Natural killer cell (primary cell): ENCODE measurements at regions of chr1 and their contacts with region 1.

Region 1: DNA sequence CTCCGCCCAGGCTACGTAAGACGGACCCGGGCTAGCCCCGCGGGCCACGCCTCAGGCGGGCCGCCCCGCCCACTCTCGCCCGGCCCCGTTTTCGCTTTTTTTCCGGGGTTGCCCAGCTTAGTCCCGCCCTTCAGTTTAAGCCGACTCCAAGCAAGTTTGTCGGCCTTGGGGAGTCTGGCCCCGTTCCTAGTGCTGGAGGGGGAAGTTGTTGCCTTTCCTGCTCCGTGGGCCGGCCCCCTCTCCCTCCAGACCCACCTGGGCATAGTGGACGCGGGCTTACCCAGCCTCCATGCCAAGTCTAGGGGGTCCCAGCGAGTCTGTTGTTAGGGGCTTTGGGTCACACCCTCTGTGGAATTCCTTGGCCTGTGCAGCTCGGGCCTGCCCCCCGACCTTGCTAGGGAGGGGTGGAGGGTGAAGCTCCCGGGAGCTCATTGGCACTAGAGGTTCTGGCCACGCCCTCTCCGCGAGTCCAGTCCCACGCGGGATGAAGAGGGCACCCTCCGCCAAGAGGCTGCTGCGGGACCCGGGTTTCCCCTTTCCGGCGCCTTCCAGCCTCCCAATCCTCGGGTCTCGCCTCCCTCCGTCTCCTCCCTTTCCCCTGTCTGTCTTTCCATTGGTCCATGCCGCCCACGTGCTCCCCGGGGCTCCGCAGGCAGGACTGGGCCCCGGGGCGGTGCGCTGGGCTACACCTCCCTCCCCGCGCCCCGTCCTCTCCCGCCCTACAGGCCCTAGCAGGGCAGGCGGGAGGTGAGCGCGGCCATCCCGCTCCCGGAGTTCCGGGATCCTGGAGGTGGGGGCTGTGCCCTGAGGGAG is 3.3 kb downstream of the RUSC1 start:
- DNase-seq: peak; percentile 79 to 93
- ATAC-seq: peak; percentile 78 to 90 (median 81)
- H3K4me3 ChIP-seq: peak overlapping the region; percentile 99
- H3K4me3 Mint-ChIP-seq: peak overlapping the region; percentile 96
- H3K27ac ChIP-seq: peak overlapping the region; percentile 89
- H3K27ac Mint-ChIP-seq: peak overlapping the region; percentile 74 to 79
- H3K4me1 ChIP-seq: peaks cover 38% of the 10 kb centered on the region
- H3K4me1 Mint-ChIP-seq: peaks cover 21 to 51% of the 10 kb centered on the region in 2 donors
- H3K27me3 ChIP-seq: no peaks in the 10 kb centered on the region
- H3K27me3 Mint-ChIP-seq: no peaks in the 10 kb centered on the region
- CTCF ChIP-seq: no peak

Region 2: DNA sequence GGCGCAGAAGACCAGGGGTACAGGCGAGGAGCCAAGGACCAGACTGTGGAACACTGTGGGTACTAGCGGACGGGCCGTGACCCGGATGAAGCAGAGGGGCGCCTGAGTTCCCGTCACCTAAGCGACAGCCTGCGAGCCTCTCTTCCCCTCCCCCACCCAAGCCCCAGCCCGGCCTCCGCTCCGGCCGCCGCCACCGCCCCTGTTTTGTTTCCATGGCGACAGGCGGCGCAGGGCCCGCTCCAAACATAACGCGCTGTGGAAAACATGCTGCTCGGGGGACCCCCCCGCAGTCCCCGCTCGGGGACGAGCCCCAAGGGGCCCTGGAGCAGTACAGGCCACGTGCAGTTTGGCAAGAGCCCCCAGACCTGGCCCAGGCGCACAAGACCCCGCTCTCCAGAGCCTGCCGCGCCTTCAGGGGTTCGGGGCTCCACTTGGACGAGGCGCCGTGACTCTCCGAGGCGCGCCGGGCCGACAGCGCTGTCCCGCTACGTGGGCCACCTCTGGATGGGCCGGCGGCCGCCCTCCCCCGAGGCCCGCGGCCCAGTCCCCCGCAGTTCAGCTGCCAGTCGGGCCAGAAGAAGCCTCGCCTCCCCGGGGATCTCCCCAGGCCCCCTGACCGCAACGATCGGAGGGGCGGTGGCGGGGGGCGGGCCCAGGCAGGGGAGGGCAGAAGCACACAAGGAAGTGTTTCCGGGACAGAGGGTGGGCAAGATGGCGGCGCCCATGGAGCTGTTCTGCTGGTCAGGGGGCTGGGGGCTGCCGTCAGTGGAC is 115.3 kb before region 1 on chr1 and contains the start of gene MTX1:
- intact Hi-C with region 1: loop called (anchors 1 kb)
- DNase-seq: peak; percentile 88 to 93
- ATAC-seq: peak; percentile 80 to 94 (median 86)
- H3K4me3 ChIP-seq: peak within 1 kb of the TSS; percentile 81
- H3K4me3 Mint-ChIP-seq: peak within 1 kb of the TSS; percentile 94
- H3K27ac ChIP-seq: peak within 1 kb of the TSS; percentile 100
- H3K27ac Mint-ChIP-seq: peak within 1 kb of the TSS; percentile 92 to 96
- H3K4me1 ChIP-seq: peaks cover 26% of the 10 kb centered on the region
- H3K4me1 Mint-ChIP-seq: peaks cover 25 to 33% of the 10 kb centered on the region in 2 donors
- H3K27me3 ChIP-seq: no peaks in the 10 kb centered on the region
- H3K27me3 Mint-ChIP-seq: no peaks in the 10 kb centered on the region
- CTCF ChIP-seq: no peak
- total RNA-seq, gene MTX1: 22.3 to 28.5 (median 27.9) TPM

Region 3: DNA sequence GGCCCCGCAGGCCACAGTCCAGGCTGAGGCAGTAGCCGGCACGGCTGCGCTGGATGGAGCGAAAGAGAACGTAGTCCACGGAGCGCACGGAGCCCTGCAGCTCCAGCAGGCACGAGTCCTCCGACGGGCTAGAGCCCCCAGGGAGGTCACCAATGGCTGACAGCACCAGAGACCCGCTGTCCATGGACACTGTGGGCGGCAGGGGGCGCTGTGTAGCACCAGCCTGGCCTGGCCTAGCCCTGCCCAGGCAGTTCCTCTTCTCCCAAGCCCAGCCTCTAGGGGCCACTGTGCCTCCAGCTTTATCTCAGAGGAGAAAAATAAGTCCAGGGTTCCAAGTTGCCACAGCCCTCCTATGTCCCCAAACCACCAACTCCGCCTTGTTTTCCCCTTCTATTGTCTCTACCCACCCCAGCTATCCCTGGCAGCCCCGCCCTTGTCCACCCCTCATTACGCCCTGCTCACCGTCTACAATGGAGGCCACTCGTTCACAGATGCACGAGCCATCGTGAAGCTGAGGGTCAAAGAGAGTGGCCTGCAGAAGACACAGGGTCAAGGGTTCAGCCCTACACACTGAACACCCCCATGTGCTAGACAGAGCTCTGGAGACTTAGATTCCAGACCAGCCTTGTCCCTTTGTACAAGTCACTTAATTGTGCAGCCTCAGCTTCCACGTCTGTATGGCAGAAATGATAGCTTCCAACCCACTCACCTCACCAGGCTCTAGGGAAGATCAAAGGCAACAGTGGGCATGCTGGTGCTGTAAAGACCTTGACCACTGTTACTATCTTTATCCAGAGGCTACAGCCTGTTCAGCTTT is 73.2 kb before region 1 on chr1:
- intact Hi-C with region 1: loop called (anchors 1 kb)
- DNase-seq: peak; percentile 96 to 97
- ATAC-seq: peak; percentile 98 to 100 (median 98)
- H3K4me3 ChIP-seq: peak overlapping the region; percentile 46
- H3K4me3 Mint-ChIP-seq: peak overlapping the region; percentile 63
- H3K27ac ChIP-seq: no peak overlapping the region
- H3K27ac Mint-ChIP-seq: peak overlapping the region in 1 of 2 donors; percentile 58
- H3K4me1 ChIP-seq: peaks cover 31% of the 10 kb centered on the region
- H3K4me1 Mint-ChIP-seq: peaks cover 18 to 33% of the 10 kb centered on the region in 2 donors
- H3K27me3 ChIP-seq: no peaks in the 10 kb centered on the region
- H3K27me3 Mint-ChIP-seq: no peaks in the 10 kb centered on the region
- CTCF ChIP-seq: peak; percentile 100

Region 4: DNA sequence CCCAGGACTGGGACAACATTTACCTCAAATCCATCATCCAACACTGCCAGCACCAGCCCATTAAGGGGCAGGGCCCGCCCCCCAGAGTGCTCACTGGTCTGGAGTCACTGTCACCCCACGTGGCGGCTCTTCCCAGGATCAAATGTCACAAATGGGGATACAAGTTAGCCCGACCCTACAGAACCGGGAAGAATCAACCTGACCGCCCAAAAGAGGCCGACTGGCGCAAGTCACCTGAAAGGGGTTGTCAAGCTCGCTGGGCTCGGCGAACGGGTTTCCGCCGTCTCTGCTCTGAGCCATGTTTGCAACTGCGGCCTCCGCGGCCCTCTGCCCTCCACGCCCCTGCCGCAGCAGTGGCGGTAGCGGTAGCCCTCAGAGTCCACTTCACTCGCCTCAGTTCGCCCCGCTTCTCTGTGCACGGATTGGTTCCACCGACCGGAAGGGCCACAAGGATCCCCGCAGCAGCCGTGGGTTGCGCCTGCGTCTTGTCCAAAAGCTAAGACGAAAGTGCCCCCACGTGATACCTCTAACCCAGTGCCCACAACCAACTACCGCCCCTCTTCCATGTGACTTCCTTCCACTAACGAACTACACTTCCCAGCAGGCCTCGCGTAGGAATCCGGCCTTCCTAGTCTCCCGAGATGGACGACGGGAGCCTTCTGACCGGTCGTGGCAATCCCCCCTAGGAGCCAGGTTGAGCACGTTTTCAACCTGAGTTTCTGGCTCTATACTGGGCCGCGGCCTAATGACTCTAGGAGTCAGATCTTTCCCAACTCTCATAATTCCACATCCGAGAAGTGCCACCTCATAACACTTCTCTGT is 61.9 kb before region 1 on chr1 and contains the start of gene SCAMP3:
- intact Hi-C with region 1: no loop called
- DNase-seq: peak; percentile 78 to 94
- ATAC-seq: peak; percentile 96 to 99 (median 99)
- H3K4me3 ChIP-seq: peak within 1 kb of the TSS; percentile 84
- H3K4me3 Mint-ChIP-seq: peak within 1 kb of the TSS; percentile 99
- H3K27ac ChIP-seq: peak within 1 kb of the TSS; percentile 64
- H3K27ac Mint-ChIP-seq: peak within 1 kb of the TSS; percentile 91 to 98
- H3K4me1 ChIP-seq: peaks cover 20% of the 10 kb centered on the region
- H3K4me1 Mint-ChIP-seq: peaks cover 32 to 34% of the 10 kb centered on the region in 2 donors
- H3K27me3 ChIP-seq: no peaks in the 10 kb centered on the region
- H3K27me3 Mint-ChIP-seq: no peaks in the 10 kb centered on the region
- CTCF ChIP-seq: no peak
- total RNA-seq, gene SCAMP3: 59.7 to 72.1 (median 65.0) TPM

Region 5: GRCh38 chr1:155273343-155274245 is 50.4 kb before region 1 on chr1 and contains the start of gene CLK2:
- intact Hi-C with region 1: loop called (anchors 2 kb)
- DNase-seq: peak; percentile 91 to 96
- ATAC-seq: peak; percentile 87 to 96 (median 89)
- H3K4me3 ChIP-seq: peak within 1 kb of the TSS; percentile 53
- H3K4me3 Mint-ChIP-seq: peak within 1 kb of the TSS; percentile 92
- H3K27ac ChIP-seq: peak within 1 kb of the TSS; percentile 71
- H3K27ac Mint-ChIP-seq: peak within 1 kb of the TSS; percentile 85 to 98
- H3K4me1 ChIP-seq: peaks cover 39% of the 10 kb centered on the region
- H3K4me1 Mint-ChIP-seq: peaks cover 46 to 48% of the 10 kb centered on the region in 2 donors
- H3K27me3 ChIP-seq: no peaks in the 10 kb centered on the region
- H3K27me3 Mint-ChIP-seq: no peaks in the 10 kb centered on the region
- CTCF ChIP-seq: no peak
- total RNA-seq, gene CLK2: 70.4 to 97.5 (median 84.4) TPM

Region 6: DNA sequence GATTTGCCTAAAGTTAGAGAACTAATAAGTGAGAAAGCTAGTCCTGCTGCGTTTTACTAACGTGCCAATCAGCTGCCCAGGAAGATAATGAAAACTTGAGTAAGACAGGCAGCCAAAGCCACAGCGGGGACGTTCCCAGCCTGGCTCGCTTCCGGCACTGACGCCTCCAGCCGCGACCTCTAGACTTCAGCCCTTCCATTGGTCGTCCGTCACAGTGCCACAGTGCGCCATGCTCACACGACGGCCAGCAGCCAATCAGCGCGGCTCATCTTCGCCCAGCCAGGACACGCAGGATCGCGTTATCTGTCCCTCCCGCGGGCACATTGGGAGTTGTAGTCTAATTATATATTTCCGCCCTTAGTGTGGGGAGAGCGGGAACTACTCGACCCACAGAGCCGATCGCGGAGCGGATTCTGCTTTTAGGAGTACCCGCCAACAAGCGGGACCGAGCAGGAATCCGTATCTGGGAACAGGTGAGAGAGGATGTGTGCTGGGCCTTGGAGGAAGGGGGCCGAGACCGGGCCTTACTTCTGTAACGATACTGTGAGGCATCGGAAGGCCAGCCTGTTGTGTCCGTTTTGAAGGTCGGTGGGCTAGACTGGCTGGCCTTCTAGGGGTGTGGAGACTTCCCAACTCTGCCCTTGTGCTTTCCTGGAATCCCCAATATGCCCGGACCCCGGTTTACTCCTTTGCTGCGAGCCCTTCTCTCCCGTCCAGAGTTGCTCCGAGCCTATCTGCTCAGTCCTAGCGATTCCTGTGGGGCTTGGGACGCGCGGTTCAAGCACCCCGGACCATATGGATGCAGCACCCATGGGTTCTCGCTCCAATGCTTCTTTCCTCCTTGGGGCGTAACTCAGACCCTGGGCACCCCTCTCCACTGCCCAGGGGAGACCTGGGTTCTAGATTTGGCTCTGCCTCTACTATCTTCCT is 15.2 kb before region 1 on chr1 and contains the start of gene FDPS:
- intact Hi-C with region 1: loop called (anchors 1 kb)
- DNase-seq: peak; percentile 93 to 99
- ATAC-seq: peak; percentile 94 to 99 (median 96)
- H3K4me3 ChIP-seq: peak within 1 kb of the TSS; percentile 67
- H3K4me3 Mint-ChIP-seq: peak within 1 kb of the TSS; percentile 97
- H3K27ac ChIP-seq: peak within 1 kb of the TSS; percentile 94
- H3K27ac Mint-ChIP-seq: peak within 1 kb of the TSS; percentile 97 to 98
- H3K4me1 ChIP-seq: peaks cover 27% of the 10 kb centered on the region
- H3K4me1 Mint-ChIP-seq: peaks cover 20 to 28% of the 10 kb centered on the region in 2 donors
- H3K27me3 ChIP-seq: no peaks in the 10 kb centered on the region
- H3K27me3 Mint-ChIP-seq: no peaks in the 10 kb centered on the region
- CTCF ChIP-seq: no peak
- total RNA-seq, gene FDPS: 105 to 110 (median 105) TPM

Region 7: DNA sequence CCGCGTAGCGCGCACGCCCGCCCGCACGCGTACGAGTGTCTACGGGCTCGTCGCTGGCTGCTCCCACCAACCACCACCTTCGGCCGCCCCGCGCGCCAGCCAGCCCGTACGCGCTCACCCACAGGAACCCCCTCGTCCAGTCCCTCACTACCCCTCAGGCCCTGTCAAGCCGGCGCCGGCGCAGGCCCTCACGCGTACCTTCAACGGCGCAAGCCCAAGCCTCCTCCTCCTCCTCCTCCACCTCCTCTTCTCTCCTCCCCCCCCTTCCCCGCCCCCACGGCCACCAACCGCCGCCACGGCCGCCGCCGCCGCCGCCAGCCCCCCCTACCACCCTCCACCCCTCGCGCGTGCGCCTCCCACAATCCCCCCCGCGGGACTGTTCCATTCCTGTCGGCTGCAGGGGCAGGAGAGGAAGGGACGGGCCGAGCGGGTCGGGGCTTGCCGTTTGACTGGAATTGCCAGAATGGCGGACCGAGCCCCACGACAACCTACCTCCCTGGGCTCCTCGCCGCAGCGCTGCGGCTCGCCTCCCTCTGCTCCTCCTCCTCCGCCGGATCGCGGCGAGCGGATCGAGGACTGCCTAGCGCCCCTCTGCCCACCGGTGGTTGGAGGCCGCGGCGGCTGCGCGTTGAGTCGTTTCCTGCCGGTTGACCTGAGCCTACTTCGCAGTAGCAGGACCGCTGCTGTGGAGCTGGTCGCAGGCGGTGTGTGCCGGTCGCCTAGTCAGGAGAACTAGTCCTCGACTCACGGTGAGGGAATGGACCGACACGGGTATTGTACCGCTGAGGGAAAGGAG is 238.8 kb after region 1 on chr1 and contains the start of gene ASH1L:
- intact Hi-C with region 1: loop called (anchors 5 kb)
- DNase-seq: peak; percentile 91 to 94
- ATAC-seq: peak; percentile 76 to 90 (median 80)
- H3K4me3 ChIP-seq: peak within 1 kb of the TSS; percentile 75
- H3K4me3 Mint-ChIP-seq: peak within 1 kb of the TSS; percentile 99
- H3K27ac ChIP-seq: peak within 1 kb of the TSS; percentile 99
- H3K27ac Mint-ChIP-seq: peak within 1 kb of the TSS; percentile 96 to 99
- H3K4me1 ChIP-seq: peaks cover 27% of the 10 kb centered on the region
- H3K4me1 Mint-ChIP-seq: peaks cover 31 to 49% of the 10 kb centered on the region in 2 donors
- H3K27me3 ChIP-seq: no peaks in the 10 kb centered on the region
- H3K27me3 Mint-ChIP-seq: no peaks in the 10 kb centered on the region
- CTCF ChIP-seq: no peak
- total RNA-seq, gene ASH1L: 82.2 to 99.5 (median 91.9) TPM